Activated naive CD4-positive, alpha-beta T cell treated with anti-CD3 and anti-CD28 coated beads for 36 hours (primary cell): ENCODE measurements at regions of chr14 and their contacts with region 1.

Region 1: DNA sequence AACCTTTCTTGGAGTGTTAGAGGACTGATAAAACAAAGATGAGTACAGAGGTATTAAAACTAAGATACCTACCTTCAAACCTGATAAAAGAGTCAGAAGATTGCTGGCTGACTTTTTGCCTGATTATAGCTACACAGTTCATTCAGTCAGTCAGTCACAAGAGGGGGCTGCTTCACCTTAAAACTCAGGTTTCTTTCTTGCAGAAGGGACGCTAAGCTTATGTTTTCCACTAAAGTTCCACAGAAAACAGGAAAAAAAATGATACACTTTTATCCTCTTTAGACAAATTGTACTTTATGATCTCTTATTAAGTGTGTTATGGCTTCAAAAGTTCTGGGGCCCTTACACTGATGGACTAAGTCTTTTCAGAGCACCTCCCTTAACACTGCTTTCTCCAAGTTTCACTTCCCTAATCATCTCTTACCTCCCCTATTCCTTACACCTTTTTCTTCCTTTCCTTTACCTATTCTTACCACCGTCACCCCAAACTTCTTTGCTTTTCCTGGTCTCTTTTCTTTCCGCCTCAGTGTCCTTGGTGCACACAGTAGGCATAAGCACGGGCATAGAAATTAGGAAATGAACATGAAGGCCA is 448.7 kb upstream of the OR4E1 start:
- DNase-seq: peak; percentile 39
- H3K4me3 Mint-ChIP-seq: peak overlapping the region; percentile 79
- H3K27ac Mint-ChIP-seq: peak overlapping the region; percentile 93
- H3K4me1 Mint-ChIP-seq: peaks cover 20% of the 10 kb centered on the region
- H3K27me3 Mint-ChIP-seq: no peaks in the 10 kb centered on the region

Region 2: DNA sequence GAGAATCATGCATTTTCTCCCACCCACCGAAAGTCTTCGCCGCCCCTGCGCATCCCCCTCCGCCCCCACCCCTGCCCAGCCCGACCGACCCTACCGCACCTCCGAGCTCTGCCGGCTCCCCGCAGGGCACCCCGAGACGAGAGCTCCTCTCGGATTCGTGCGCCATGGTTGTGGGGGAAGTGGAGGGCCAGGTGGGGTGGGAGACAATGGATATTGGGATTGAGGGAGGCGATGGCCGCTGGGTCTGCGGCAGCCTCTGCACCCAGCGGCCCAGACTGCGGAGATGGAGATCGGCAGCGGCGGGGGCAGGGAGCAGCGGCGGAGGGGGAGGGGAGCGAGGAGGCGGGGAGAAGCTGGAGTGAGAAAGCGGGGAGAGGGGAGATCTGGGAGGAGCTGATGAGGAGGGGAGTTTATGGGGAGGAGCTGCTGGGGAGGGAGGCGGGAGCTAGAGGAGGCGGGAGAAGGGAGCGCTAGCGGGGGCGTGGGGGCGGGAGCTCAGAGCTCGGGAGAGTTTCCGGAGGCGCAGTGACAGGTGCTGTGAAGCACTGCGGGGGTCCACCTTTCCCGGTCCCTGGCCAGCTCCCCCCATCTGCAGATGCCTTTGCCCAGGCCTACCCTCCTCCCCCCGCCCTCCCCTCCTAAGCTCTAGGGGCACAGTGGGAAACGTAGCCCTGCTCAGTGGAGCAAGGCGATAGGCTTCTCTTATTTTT is 596.2 kb before region 1 on chr14 and contains the start of gene SALL2:
- CTCF ChIA-PET with region 1: no interaction called
- intact Hi-C with region 1: no loop called
- DNase-seq: peak; percentile 86
- H3K4me3 Mint-ChIP-seq: peak within 1 kb of the TSS; percentile 79
- H3K27ac Mint-ChIP-seq: peak within 1 kb of the TSS; percentile 70
- H3K4me1 Mint-ChIP-seq: peaks cover 9% of the 10 kb centered on the region
- H3K27me3 Mint-ChIP-seq: no peaks in the 10 kb centered on the region
- total RNA-seq, gene SALL2: 3.1 to 4.1 TPM

Region 3: DNA sequence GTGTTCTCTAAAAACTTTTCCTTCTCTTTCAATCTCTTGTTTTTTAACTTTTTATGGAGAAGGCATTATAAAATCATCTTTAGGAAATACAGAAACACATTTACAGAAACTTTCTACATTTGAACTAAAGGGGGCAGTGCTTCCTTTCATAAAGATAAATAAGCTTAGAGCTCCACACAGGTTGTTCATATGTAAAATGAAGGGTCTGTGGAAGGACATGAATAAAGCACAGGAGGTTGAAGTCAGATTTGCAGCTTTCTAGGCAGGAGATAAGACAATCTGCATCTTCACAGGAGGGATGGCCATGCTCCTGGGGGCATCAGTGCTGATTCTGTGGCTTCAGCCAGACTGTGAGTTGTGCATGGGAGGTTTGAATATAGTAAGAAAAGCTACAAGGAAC is 40.7 kb after region 1 on chr14:
- CTCF ChIA-PET with region 1: interaction called, 6 read pairs
- intact Hi-C with region 1: loop called (anchors 5 kb)
- DNase-seq: no peak
- H3K4me3 Mint-ChIP-seq: peak overlapping the region; percentile 73
- H3K27ac Mint-ChIP-seq: peak overlapping the region; percentile 82
- H3K4me1 Mint-ChIP-seq: peaks cover 15% of the 10 kb centered on the region
- H3K27me3 Mint-ChIP-seq: no peaks in the 10 kb centered on the region

Region 4: GRCh38 chr14:22200977-22201605 is 78.8 kb after region 1 on chr14:
- CTCF ChIA-PET with region 1: interaction called, 3 read pairs
- intact Hi-C with region 1: loop called (anchors 5 kb)
- DNase-seq: no peak
- H3K4me3 Mint-ChIP-seq: no peak overlapping the region
- H3K27ac Mint-ChIP-seq: no peak overlapping the region
- H3K4me1 Mint-ChIP-seq: peaks cover 3% of the 10 kb centered on the region
- H3K27me3 Mint-ChIP-seq: no peaks in the 10 kb centered on the region